GM18951 (cell line): ENCODE measurements at regions of chr9 and their contacts with region 1.

Region 1: DNA sequence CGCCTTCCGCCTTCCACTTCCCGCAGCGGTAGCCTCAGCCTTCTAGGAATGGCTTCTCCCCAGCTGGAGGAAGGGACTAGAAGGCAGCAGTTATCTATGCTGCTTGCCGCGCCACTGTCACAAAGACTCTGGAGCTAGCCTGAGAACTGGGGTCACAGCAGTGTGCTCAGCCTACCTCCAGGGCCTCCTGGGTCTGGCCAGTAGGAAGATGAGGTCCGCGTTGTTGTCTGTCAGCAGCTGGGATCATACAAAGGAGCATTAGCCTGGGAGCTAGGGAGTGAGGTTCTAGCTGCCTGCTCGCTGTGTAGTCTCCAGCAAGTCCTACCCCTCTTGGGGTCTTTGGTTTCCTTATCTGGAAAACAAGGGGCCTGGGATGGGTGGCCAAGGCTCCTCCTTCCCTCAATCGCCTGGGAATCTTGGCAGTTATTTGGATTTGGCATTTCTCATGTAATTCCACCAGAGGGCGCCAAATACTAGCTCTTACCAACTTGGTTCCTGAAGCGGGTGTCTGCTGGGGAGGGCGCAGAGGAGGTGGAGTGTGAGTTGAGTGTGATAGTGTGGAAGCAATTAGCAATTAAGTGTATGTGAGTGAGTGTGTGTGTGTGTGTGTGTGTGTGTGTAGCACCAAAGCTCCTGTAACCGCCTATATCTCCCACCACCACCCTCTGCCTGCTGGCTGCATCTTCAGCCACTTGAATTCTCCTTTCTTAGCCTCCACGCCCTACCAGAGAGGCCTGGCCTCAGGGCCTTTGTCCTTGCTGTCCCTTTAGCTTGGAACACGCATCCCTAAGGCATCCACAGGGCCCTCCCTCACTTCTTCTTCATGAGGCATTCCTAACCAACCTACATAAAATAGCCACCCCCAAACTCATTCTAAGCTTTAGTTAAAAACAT is 97.1 kb downstream of the ENTREP1 start:
- POLR2A ChIP-seq: no peak

Region 2: GRCh38 chr9:69174616-69175463 is 247.3 kb before region 1 on chr9:
- in situ Hi-C with region 1: no loop called
- POLR2A ChIP-seq: peak; percentile 17

Region 3: DNA sequence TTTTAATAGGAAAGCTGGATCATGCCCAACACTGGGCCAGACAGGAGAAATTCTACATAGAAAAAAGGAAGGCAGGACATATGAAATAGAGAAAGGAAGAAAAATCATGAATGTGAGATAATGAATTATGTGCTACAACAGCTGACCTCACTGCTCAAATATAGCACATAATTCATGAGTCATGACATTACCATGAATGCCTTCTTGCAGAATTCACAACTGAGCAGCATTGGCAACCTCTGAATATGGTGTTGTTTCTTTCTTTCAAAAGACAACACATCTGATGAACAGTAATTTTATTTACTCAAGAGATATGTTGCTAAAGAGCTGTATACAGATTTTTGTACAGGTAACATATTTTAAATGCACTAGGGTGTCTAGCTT is 215.7 kb after region 1 on chr9:
- in situ Hi-C with region 1: no loop called
- POLR2A ChIP-seq: no peak

Region 4: DNA sequence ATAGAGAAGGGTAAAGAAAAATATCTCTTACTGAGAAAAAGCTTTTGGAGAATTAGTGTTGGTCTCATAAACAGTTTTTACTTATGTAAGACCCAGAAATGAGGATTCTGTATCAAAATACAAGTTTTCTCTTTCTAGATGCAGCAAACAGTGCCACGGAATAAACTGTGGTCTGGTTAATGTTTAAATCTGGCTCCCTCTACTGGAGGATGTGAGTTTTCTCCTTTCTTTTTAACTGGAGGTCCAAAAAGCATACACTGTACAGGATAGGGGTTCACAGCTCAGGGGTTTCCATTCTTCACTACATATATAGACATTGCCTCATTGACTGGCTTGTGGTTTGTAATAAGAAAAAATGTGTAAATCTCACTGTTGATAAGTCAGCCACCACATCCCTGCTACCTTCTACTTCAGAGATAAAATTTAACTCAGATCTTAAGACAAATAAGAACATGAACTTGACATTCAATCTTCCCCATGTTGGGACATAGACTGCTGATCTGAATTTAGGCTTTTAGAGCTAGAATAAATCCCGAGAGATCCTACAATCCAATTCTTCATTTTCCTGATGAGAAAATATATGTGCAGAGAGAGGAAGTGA is 497.4 kb after region 1 on chr9:
- in situ Hi-C with region 1: loop called (anchors 10 kb)
- POLR2A ChIP-seq: no peak

Region 5: DNA sequence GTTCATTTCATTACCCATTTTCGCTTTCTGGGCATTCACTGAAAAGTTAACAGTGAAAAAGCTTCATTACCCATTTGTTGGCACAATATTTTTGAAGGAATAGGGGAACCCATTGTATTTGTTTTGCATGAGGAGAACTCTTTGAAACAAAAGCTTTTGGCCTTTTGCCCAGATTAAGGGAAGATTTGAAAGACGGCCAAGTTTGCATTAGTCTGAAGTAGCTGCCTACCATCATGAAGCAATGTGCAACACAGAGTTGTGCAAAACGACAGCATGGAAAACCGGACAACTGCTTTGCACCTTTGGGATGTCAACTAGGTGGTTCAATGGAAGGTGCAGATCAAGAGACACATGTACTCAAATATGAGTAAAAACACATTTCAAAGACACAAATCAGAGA is 1614.3 kb after region 1 on chr9:
- in situ Hi-C with region 1: no loop called
- POLR2A ChIP-seq: no peak